GM10248 (cell line): ENCODE measurements at regions of chr10 and their contacts with region 1.

Region 1: DNA sequence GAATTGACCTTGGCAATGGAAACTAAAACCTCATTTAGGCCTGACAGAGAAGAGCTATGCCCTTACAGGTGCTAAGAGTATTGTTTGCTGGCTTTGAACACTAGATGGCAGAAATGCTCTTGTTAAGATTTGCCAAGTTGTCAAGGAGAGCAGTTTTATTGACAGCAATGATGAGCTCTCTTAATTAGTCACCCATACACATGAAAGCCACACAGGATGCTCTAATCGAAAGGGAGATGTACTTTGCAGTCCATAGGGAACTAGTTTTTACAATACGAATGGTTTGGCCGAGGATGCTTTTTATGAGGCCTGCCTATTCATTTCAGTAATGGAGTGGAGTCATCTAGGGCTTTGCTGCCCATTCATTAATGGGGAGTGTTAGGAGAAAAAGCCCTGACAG is 45.4 kb upstream of the MBL2 start:
- DNase-seq: peak; percentile 34
- CTCF ChIP-seq: peak; percentile 60

Region 2: GRCh38 chr10:52836816-52837215 is 18.8 kb after region 1 on chr10:
- CTCF ChIA-PET with region 1: interaction called, 15 read pairs
- POLR2A ChIA-PET with region 1: no interaction called
- DNase-seq: no peak
- CTCF ChIP-seq: no peak

Region 3: DNA sequence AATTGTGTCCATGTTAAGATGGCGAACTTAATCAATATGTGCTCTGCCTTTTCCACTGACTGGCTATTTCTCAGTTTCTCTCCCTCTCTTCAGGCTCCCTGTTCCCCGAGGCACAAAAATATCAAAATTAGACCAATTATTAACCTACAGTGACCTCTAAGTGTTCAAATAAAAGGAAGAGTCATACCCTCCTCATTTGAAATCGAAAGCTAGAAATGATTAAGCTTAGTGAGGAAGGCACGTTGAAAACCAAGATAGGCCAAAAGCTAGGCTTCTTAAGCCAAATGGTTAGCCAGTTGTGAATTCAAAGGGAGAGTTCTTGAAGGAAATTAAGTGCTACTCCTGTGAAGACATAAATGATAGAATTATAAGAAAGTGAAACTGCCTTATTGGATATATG is 35.7 kb after region 1 on chr10:
- CTCF ChIA-PET with region 1: no interaction called
- POLR2A ChIA-PET with region 1: no interaction called
- DNase-seq: no peak
- CTCF ChIP-seq: no peak

Region 4: DNA sequence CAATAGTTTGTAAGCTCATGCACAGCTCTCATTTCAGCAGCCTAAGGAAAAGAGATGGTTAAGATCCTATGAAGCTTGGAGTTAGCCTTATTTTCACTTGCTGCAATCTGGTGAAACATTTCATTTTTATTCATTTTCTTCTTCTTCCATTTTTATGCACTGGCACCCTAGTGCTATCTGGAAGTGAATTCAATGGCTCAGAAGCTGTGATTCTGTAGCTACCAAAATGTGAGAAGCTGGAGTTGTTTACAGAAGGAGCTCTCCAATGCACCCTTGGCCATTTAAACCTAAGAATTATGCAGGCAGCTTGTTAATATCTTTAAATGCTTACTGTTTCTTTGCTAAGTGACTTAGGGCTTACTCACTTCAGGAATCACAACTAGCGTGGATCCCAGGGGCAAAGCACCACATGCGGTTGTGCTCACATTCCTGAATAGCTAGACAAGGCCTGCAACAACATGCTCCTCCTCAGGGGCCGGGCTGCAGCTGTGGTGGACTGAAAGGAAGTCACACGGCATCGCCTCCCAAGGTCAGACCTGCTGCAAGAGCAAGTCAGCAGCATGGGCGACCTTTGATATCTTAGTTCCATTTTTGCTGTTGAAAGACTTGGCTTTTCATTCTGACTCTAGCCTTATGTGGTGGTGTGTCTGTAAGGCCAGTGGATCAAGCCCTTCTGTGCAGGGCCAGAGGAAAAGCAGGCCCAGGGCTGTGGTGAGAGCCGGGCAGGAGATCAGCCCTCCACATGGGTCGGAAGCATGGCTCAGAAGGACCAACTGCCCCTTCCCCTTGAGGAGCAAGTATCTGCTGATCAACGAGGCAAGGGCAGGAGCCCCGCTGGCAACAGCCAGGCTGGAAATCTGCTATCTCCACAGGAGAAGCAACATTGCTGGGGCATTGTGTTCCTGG is 46.4 kb after region 1 on chr10:
- CTCF ChIA-PET with region 1: no interaction called
- POLR2A ChIA-PET with region 1: no interaction called
- DNase-seq: no peak
- CTCF ChIP-seq: no peak